MCF 10A (cell line): ENCODE measurements at regions of chr1 and their contacts with region 1.

Region 1: DNA sequence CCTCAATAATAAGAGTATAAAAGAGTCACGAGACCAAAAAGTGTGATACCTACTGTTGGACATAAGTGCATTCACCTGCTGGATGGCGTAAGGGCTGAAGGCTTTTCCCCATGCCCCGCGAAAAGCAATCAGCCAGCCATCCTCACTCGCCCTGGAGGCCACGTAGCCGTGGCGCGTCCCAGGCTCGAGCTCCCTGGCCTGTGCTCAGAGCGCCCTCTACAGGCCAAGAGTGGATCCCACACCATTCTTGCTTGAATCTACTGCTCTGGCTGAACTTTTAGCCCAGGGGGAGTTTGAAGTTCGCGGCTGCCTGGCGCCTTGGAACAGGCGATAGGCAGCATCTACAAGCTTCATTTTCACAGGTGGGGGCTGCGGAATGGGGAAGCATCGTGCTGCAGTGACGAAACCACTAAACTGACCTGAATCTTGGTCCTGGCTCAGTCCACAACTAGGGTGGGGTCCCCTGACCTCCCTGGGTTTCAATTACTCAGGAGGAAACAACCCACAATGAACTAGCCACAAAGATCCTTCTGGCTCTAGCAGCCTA is 70.3 kb upstream of the SERBP1 start:
- DNase-seq: peak; percentile 92
- H3K4me3 Mint-ChIP-seq: no peak overlapping the region
- H3K27ac Mint-ChIP-seq: no peak overlapping the region
- H3K4me1 Mint-ChIP-seq: no peaks in the 10 kb centered on the region
- H3K27me3 Mint-ChIP-seq: no peaks in the 10 kb centered on the region
- CTCF ChIP-seq: peak; percentile 95

Region 2: DNA sequence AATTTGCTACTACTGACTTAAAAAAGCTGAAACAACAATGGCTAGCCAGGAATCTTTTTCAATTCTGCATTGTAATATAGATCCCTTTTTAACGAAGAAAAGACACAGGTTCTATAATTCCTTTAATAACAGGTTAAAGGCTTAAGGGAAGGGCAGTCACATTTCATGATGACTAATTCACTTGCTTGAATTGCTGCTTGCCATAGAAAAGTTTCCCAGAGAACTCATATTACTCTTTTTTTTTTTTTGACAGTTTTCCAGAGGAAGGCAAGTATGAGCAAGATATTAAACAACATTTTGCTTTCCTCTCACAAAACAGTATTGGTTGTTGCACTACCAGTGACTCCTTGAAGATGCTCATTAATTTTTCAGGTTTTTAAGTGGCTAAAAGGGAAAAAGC is 273.3 kb before region 1 on chr1:
- CTCF ChIA-PET with region 1: interaction called, 31 read pairs
- POLR2A ChIA-PET with region 1: no interaction called
- intact Hi-C with region 1: no loop called
- DNase-seq: peak; percentile 59
- H3K4me3 Mint-ChIP-seq: no peak overlapping the region
- H3K27ac Mint-ChIP-seq: no peak overlapping the region
- H3K4me1 Mint-ChIP-seq: peaks cover 12% of the 10 kb centered on the region
- H3K27me3 Mint-ChIP-seq: no peaks in the 10 kb centered on the region
- CTCF ChIP-seq: no peak

Region 3: DNA sequence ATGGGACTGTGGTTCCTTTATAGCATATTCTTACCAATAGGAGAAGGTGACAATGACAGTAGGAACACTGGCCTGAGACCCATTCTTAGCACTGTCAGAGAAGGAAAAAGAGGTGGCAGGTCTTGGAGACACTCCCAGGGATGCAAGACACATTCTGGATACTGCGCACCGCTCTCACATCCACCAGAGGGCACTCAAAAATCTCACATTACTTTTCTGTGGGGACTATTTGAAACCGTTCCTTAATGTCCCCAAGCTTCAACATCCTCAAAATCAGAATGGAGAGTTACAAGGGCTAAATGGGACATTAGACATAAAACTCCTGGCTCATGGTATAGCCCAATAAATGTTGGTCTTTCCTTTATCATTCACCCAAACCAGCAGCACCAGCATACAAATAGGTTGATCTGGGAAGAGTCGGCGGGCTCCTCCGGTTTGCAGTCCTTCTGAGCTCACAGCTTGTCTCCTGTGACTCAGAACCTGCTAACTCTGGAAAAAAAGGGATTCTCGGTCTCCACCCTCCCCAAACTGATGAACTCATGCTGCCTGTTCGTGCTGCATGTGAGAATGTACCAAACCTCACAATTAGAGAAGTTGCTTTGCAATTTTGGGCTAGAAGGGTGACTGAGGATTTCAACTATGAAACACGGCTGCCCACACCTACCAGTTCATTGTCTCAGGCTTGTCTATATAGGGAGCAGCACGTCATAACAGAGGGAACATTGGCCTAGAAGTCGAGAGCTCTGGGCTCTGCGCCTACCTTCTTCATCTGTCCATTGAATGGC is 152.6 kb before region 1 on chr1:
- CTCF ChIA-PET with region 1: interaction called, 70 read pairs
- POLR2A ChIA-PET with region 1: interaction called, 4 read pairs
- intact Hi-C with region 1: loop called (anchors 1 kb)
- DNase-seq: peak; percentile 74
- H3K4me3 Mint-ChIP-seq: peak overlapping the region; percentile 67
- H3K27ac Mint-ChIP-seq: peak overlapping the region; percentile 80
- H3K4me1 Mint-ChIP-seq: peaks cover 14% of the 10 kb centered on the region
- H3K27me3 Mint-ChIP-seq: no peaks in the 10 kb centered on the region
- CTCF ChIP-seq: peak; percentile 74

Region 4: GRCh38 chr1:67460676-67461500 is 39.6 kb before region 1 on chr1:
- CTCF ChIA-PET with region 1: interaction called, 11 read pairs
- POLR2A ChIA-PET with region 1: no interaction called
- intact Hi-C with region 1: no loop called
- DNase-seq: no peak
- H3K4me3 Mint-ChIP-seq: no peak overlapping the region
- H3K27ac Mint-ChIP-seq: no peak overlapping the region
- H3K4me1 Mint-ChIP-seq: no peaks in the 10 kb centered on the region
- H3K27me3 Mint-ChIP-seq: no peaks in the 10 kb centered on the region
- CTCF ChIP-seq: no peak

Region 5: DNA sequence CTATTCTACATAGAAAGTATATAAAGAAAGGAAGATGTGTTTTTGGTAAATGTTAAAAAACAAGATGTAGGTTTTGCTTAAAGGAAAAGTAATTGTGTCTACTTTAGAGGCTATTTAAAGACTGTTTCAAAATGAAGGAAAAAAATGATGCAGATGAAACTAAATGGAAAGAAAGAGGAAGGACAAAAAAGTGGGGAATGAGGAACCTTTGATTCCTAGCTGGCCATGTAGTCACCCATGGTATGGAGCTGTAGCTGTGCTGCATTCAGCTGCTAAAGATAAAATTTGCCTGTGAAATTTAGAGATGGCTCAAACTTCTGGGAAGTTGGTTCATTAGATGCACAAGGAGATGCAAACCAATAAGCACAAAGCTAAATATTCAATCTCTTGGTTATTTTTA is 16.6 kb after region 1 on chr1:
- CTCF ChIA-PET with region 1: interaction called, 30 read pairs
- POLR2A ChIA-PET with region 1: no interaction called
- intact Hi-C with region 1: no loop called
- DNase-seq: no peak
- H3K4me3 Mint-ChIP-seq: no peak overlapping the region
- H3K27ac Mint-ChIP-seq: no peak overlapping the region
- H3K4me1 Mint-ChIP-seq: no peaks in the 10 kb centered on the region
- H3K27me3 Mint-ChIP-seq: no peaks in the 10 kb centered on the region
- CTCF ChIP-seq: no peak

Region 6: DNA sequence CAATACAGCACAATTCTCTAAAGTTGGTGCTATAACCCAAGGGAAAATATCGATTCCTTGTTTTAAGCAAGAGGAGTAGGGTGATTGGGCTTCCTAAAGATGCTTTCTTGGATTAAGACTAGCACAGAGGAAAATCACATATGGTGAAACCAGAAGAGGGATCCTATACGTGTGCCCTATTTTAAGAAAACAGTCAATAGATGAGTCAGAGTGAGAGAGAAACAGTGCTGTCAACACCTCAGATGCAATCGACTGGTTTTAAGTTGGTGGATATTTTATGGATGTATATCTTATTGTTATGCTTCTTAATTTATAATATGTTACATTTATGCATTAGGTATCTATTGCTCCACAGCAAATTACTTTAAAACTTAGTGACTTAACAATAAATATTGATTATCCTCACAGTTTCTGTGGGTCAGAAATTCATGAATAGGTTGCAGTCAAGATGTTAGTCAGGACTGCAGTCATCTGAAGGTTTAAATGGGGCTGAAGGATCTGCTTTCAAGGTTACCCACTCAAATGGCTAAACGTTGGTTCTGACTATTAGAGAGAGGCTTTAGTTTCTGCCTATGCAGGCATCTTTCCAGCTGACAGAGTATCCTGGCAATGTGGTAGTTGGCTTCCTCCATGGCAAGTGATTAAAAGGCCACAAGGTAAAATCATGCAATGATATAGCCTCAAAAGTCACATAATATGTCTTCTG is 1058.0 kb after region 1 on chr1:
- CTCF ChIA-PET with region 1: no interaction called
- POLR2A ChIA-PET with region 1: no interaction called
- intact Hi-C with region 1: no loop called
- DNase-seq: peak; percentile 22
- H3K4me3 Mint-ChIP-seq: no peak overlapping the region
- H3K27ac Mint-ChIP-seq: no peak overlapping the region
- H3K4me1 Mint-ChIP-seq: no peaks in the 10 kb centered on the region
- H3K27me3 Mint-ChIP-seq: peaks cover 55% of the 10 kb centered on the region
- CTCF ChIP-seq: no peak